ENCODE measurements at regions of chr5 and their contacts with region 1.

Region 1: DNA sequence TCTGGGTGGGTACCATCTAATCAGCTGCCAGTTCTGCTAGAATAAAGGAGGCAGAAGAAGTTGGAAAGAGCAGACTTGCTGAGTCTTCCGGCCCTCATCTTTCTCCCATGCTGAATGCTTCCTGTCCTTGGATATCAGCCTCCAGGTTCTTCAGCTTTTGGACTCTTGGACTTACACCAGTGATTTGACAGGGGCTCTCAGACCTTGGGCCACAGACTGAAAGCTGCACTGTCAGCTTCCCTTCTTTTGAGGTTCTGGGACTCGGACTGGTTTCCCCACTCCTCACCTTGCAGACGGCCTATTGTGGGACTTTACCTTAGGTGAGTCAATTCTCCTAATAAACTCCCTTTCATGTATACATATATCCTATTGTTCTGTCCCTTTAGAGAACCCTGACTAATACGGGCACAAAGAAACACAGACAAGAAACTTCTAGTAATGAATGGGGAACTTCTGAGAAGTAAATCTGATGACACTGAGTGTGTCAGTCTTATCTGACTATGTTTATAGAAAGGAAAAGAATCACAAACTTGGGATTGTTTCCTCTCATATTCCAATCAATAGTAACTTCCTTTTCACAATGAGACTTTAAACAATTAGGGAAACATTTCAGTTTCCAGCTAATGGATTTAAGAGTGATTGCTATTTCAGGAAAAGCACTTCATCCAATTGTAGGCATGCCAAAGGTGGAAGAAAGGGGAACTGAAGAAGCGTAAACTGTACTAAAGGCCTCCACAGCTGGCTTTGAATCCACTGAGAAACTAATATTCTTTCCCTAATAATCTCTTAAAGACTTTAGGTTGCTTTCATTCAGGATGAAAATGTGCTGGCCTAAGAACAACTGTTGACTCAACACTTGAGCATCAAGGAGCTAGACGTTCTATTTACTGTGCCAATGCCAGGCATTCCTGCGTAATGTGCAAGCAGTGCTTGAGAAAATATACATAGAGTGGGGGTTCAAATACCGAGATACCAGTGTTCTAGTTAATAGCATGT is 127.9 kb upstream of the PTGER4 start:
- DNase-seq: peak; percentile 81 to 98
- H3K4me3 ChIP-seq: peak overlapping the region; percentile 15; the same call in 1 of the 2 replicates
- H3K27ac ChIP-seq: peak overlapping the region; percentile 77
- H3K4me1 ChIP-seq: peaks cover 27% of the 10 kb centered on the region
- H3K27me3 ChIP-seq: no peaks in the 10 kb centered on the region
- CTCF ChIP-seq: no peak

Region 2: DNA sequence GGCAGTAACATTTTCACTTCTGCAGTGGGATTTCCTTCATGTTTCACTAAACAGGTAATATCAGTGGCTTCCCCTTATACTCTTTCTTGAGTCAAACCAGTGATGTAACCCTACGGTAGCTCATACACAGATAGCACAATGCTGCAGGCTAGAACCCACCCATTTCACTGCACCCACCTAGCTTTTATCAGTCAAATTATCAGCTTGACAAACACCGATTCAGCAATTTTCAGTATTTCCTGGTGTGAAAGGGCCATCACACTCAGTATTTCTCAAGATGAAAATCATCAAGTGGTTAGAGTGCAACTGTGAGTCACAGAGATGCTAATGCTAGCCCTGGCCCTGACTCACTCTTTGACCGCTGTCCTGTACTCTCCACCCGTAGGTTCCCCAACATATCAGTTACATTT is 114.3 kb before region 1 on chr5:
- CTCF ChIA-PET with region 1: no interaction called
- POLR2A ChIA-PET with region 1: interaction called, 5 read pairs
- intact Hi-C with region 1: loop called (anchors 1 kb)
- DNase-seq: peak; percentile 77 to 99
- H3K4me3 ChIP-seq: no peak overlapping the region
- H3K27ac ChIP-seq: peak overlapping the region; percentile 74
- H3K4me1 ChIP-seq: peaks cover 22% of the 10 kb centered on the region
- H3K27me3 ChIP-seq: no peaks in the 10 kb centered on the region
- CTCF ChIP-seq: no peak

Region 3: GRCh38 chr5:40484495-40484894 is 67.3 kb before region 1 on chr5:
- CTCF ChIA-PET with region 1: no interaction called
- POLR2A ChIA-PET with region 1: no interaction called
- intact Hi-C with region 1: loop called (anchors 5 kb)
- DNase-seq: no peak
- H3K4me3 ChIP-seq: no peak overlapping the region
- H3K27ac ChIP-seq: no peak overlapping the region
- H3K4me1 ChIP-seq: peaks cover 12% of the 10 kb centered on the region
- H3K27me3 ChIP-seq: no peaks in the 10 kb centered on the region
- CTCF ChIP-seq: no peak

Region 4: DNA sequence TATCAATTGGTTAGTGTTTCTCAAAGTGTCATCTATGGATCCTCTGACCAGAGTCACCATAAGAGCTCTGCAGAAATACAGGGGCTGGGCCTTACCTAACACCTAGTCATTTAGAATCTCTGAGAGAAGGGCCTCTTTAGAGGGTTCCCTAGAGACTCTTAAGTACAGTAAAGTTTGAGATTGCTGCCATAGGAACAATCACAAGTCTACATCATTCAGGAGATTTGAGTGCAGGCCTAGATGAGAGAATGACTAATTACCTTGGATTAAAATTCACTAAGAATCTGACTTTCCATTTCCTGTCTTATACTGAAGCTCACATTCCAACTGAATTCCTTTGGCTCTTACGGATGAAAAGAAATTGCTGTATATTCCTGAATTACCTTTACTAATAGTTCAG is 54.2 kb before region 1 on chr5:
- CTCF ChIA-PET with region 1: no interaction called
- POLR2A ChIA-PET with region 1: no interaction called
- intact Hi-C with region 1: no loop called
- DNase-seq: peak in 1 of 2 experiments; percentile 46
- H3K4me3 ChIP-seq: no peak overlapping the region
- H3K27ac ChIP-seq: no peak overlapping the region
- H3K4me1 ChIP-seq: no peaks in the 10 kb centered on the region
- H3K27me3 ChIP-seq: no peaks in the 10 kb centered on the region
- CTCF ChIP-seq: no peak

Region 5: GRCh38 chr5:40587284-40587882 is 35.6 kb after region 1 on chr5:
- CTCF ChIA-PET with region 1: no interaction called
- POLR2A ChIA-PET with region 1: interaction called, 3 read pairs
- intact Hi-C with region 1: loop called (anchors 1 kb)
- DNase-seq: peak; percentile 28 to 93
- H3K4me3 ChIP-seq: no peak overlapping the region
- H3K27ac ChIP-seq: peak overlapping the region; percentile 49
- H3K4me1 ChIP-seq: peaks cover 19% of the 10 kb centered on the region
- H3K27me3 ChIP-seq: no peaks in the 10 kb centered on the region
- CTCF ChIP-seq: no peak